ENCODE measurements at regions of chr3 and their contacts with region 1.

Region 1: GRCh38 chr3:180802837-180803236 is 109.6 kb upstream of the FXR1 start:
- DNase-seq: peak; percentile 52
- ATAC-seq: peak; percentile 72
- H3K4me3 ChIP-seq: no peak overlapping the region
- H3K27ac ChIP-seq: no peak overlapping the region
- H3K4me1 ChIP-seq: no peaks in the 10 kb centered on the region
- H3K27me3 ChIP-seq: peaks cover 21% of the 10 kb centered on the region
- CTCF ChIP-seq: peak; percentile 60

Region 2: DNA sequence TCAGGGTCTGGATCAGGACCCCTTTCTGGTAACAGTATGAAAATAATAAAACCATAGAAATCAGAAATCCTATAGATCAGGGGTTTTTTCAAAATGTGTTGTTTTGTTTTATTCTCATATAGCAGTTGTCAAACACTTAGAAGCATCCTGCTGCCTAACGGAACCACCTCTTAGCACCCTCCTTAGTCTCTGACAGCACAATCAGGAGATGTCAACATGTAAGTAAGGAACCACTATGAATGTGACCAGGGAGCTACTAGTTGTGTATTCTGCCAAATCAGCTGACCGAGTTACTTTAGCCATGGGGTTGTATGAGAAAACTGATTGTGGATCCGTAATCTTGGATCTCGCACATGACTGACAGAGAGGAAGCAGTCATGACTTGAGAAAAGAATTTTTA is 145.7 kb before region 1 on chr3:
- CTCF ChIA-PET with region 1: no interaction called
- POLR2A ChIA-PET with region 1: no interaction called
- intact Hi-C with region 1: no loop called
- DNase-seq: no peak
- ATAC-seq: no peak
- H3K4me3 ChIP-seq: no peak overlapping the region
- H3K27ac ChIP-seq: no peak overlapping the region
- H3K4me1 ChIP-seq: no peaks in the 10 kb centered on the region
- H3K27me3 ChIP-seq: peaks cover 37% of the 10 kb centered on the region
- CTCF ChIP-seq: no peak

Region 3: GRCh38 chr3:181176601-181177000 is 373.8 kb after region 1 on chr3:
- CTCF ChIA-PET with region 1: no interaction called
- POLR2A ChIA-PET with region 1: no interaction called
- intact Hi-C with region 1: loop called (anchors 2 kb)
- DNase-seq: peak; percentile 71
- ATAC-seq: no peak
- H3K4me3 ChIP-seq: no peak overlapping the region
- H3K27ac ChIP-seq: no peak overlapping the region
- H3K4me1 ChIP-seq: no peaks in the 10 kb centered on the region
- H3K27me3 ChIP-seq: peaks cover 50% of the 10 kb centered on the region
- CTCF ChIP-seq: peak; percentile 73